Activated CD4-positive, alpha-beta memory T cell treated with anti-CD3 and anti-CD28 coated beads, Interleukin-2, amount 10 ng/mL, durations not matched to agents 7 days and 5 days (primary cell): ENCODE measurements at regions of chr10 and their contacts with region 1.

Region 1: GRCh38 chr10:73495884-73496674 is at the start of gene PPP3CB:
- DNase-seq: peak; percentile 93
- H3K4me3 Mint-ChIP-seq: peak within 1 kb of the TSS; percentile 93
- H3K27ac Mint-ChIP-seq: peak within 1 kb of the TSS; percentile 96
- H3K4me1 Mint-ChIP-seq: peaks cover 52% of the 10 kb centered on the region
- H3K27me3 Mint-ChIP-seq: no peaks in the 10 kb centered on the region
- total RNA-seq, gene PPP3CB: 53.4 to 55.4 TPM

Region 2: DNA sequence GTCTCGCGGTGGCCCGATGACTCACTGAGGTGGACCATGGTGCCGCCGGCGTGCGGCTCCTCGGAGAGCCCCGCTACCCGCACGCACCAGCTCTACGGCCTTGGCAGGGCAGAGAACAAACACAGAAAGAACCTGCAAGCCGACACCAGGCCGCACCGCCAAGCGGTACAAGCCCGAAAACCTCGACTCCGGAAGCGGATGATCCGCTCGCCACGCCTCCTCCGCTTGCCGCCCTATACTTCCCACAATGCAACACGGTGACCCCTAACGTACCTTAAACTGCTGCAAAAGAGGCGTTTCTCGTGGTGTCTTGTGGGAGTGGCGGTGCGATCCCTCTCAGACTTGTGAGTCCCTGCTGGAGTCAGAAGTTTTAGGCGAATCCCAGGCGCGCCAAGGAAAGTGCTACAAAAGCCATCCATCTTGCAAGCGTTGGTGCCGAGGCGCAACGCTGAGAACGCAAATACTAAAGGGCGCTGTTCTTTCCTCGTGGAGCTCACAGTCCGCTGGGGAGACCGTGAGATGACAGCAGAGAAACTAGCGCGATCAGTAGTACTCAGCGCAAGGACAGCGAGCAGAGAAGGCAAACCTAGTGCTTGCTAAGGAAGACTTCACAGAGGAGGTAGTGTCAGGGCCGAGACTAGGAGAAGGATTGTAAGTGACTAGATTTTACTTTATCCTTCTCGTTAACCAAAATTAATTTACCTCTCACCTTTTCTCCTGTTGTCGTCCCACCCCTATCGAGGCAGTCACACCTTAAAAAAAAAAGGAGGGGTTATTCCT is 243.4 kb before region 1 on chr10 and contains the start of gene MRPS16:
- CTCF ChIA-PET with region 1: no interaction called
- POLR2A ChIA-PET with region 1: interaction called, 42 read pairs
- DNase-seq: peak; percentile 95
- H3K4me3 Mint-ChIP-seq: peak within 1 kb of the TSS; percentile 99
- H3K27ac Mint-ChIP-seq: peak within 1 kb of the TSS; percentile 95
- H3K4me1 Mint-ChIP-seq: peaks cover 51% of the 10 kb centered on the region
- H3K27me3 Mint-ChIP-seq: no peaks in the 10 kb centered on the region
- total RNA-seq, gene MRPS16: 77.5 to 80.8 TPM

Region 3: DNA sequence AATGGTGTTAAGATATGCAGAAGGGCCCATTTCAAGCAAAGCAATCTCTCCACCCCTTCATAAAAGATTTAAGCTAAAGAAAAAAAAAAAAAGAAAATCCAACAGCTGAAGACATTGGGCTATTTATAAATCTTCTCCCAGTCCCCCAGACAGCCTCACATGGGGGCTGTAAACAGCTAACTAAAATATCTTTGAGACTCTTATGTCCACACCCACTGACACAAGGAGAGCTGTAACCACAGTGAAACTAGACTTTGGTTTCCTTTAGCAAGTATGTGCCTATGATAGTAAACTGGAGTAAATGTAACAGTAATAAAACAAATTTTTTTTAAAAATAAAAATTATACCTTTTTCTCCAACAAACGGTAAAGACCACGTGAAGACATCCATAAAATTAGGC is 28.9 kb before region 1 on chr10:
- CTCF ChIA-PET with region 1: no interaction called
- POLR2A ChIA-PET with region 1: interaction called, 16 read pairs
- DNase-seq: no peak
- H3K4me3 Mint-ChIP-seq: no peak overlapping the region
- H3K27ac Mint-ChIP-seq: no peak overlapping the region
- H3K4me1 Mint-ChIP-seq: peaks cover 12% of the 10 kb centered on the region
- H3K27me3 Mint-ChIP-seq: no peaks in the 10 kb centered on the region

Region 4: DNA sequence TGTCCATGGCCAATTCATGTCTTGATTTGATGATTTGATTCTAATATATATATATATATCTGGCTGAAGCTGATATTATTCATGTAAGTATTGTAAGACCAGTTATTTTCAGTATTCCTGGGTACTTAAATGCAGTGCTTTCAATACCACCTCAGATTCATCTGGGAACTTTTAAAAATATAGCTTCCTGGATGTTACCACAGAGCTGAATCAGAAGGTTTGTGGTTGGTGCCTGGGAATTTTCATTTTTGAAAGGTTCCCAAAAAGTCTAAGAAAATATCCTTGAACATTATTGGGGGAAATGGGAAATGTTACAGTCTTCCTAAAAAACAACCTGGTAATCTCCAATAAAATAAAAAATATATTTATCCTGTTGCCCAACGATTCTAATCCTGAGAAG is 10.4 kb after region 1 on chr10:
- CTCF ChIA-PET with region 1: no interaction called
- POLR2A ChIA-PET with region 1: interaction called, 15 read pairs
- DNase-seq: no peak
- H3K4me3 Mint-ChIP-seq: no peak overlapping the region
- H3K27ac Mint-ChIP-seq: no peak overlapping the region
- H3K4me1 Mint-ChIP-seq: peaks cover 21% of the 10 kb centered on the region
- H3K27me3 Mint-ChIP-seq: no peaks in the 10 kb centered on the region

Region 5: DNA sequence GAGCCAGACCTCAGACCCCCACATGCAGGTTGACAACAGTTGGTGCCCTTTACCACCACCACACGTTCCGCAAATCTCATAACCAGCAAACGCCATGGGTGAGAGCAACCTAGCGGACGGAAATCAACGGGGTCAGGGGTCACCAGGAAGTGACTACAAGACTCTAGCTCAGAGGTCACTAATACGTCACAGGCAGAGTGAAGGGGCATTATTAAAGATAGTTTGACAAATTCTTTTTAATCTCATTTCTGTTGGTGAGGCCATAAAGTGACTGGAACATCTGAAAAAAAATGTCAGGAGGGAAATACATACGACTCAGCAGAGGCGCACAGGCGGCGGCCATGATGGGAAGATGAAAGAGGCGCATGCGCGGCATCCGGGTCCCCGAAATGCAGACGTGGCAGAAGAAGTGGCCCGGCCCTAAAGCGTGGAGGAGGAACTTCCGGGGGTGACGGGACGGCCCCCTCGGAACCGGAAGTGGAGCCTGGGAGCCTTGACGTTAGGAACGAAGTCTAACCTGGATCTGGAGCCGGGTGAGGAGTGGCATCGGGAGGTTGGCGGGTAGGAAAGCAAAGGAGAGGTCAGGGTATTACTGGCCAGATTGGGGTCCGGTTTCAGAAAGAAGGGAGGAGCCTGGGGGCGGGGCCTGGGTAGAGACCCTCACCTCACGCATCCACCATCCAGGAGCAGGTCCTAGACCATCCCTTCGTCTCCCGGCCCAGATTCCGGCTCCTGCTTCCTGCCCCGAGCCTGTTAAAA is 248.0 kb after region 1 on chr10 and contains the start of gene SEC24C:
- CTCF ChIA-PET with region 1: no interaction called
- POLR2A ChIA-PET with region 1: interaction called, 16 read pairs
- DNase-seq: peak; percentile 97
- H3K4me3 Mint-ChIP-seq: peak within 1 kb of the TSS; percentile 94
- H3K27ac Mint-ChIP-seq: peak within 1 kb of the TSS; percentile 99
- H3K4me1 Mint-ChIP-seq: peaks cover 38% of the 10 kb centered on the region
- H3K27me3 Mint-ChIP-seq: no peaks in the 10 kb centered on the region
- total RNA-seq, gene SEC24C: 106 to 108 TPM